ENCODE measurements at regions of chr19 and their contacts with region 1.

Region 1: GRCh38 chr19:4791170-4792018 is at the start of gene FEM1A:
- DNase-seq: peak; percentile 100
- H3K4me3 ChIP-seq: peak within 1 kb of the TSS; percentile 41 to 81 (median 52)
- H3K27ac ChIP-seq: peak within 1 kb of the TSS; percentile 78 to 85
- H3K4me1 ChIP-seq: peaks cover 0 to 23% (median 0%) of the 10 kb centered on the region in 3 donors
- H3K27me3 ChIP-seq: no peaks in the 10 kb centered on the region
- CTCF ChIP-seq: peak; percentile 98
- total RNA-seq, gene FEM1A: 11.3 TPM

Region 2: GRCh38 chr19:4738734-4739133 is 52.7 kb before region 1 on chr19:
- intact Hi-C with region 1: loop called (anchors 5 kb)
- DNase-seq: no peak
- H3K4me3 ChIP-seq: no peak overlapping the region
- H3K27ac ChIP-seq: no peak overlapping the region
- H3K4me1 ChIP-seq: no peaks in the 10 kb centered on the region
- H3K27me3 ChIP-seq: peaks cover 2% of the 10 kb centered on the region
- CTCF ChIP-seq: no peak